Activated CD4-positive, alpha-beta T cell treated with anti-CD3 and anti-CD28 coated beads, Interleukin-2, amount 10 ng/mL, durations not matched to agents 24 days and 14 days (primary cell): ENCODE measurements at regions of chr6 and their contacts with region 1.

Region 1: DNA sequence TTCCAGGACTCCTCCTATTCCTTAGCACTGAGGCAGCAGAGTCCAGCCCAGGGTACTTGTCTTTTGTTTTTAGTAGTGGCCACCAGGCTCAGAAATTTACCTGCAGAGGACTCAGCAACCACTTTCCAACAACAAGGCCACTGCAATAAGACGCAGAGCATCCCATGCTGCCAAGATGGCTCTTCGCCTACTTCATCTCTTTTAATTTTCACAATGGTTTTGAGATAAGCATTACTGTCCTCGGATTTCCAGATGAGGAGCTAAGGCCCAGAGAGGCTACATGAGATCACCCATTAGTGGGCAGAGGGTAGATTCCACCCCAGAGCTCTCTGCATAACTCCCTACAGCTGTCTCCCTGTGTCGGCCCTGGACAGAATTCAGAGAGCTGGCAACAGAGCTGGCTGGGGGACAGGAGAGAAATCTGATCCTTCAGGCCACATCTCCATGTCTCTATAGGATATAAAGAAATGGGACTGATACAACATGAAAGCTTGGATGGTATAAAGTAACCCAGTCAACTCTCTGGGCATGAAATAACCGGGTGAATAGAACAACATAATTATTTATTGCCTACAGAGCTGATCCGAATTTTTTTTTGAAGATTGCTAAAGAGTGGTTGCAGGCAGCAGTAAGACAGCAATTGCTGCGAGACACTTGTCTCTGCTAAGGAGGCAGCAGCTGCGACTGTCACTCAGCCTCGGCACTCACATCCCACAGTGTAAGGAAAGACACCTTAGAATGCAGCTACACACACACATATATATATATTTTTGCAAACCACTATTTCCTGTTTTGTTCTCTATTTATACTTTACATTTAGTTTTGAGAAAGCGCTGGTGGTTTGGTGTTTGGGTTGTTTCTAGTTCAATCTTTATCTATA is 37.2 kb downstream of the SCML4 start:
- DNase-seq: peak; percentile 86
- H3K4me3 Mint-ChIP-seq: peak overlapping the region; percentile 78
- H3K27ac Mint-ChIP-seq: peak overlapping the region; percentile 72
- H3K4me1 Mint-ChIP-seq: peaks cover 58% of the 10 kb centered on the region
- H3K27me3 Mint-ChIP-seq: no peaks in the 10 kb centered on the region

Region 2: GRCh38 chr6:107756660-107757355 is 30.1 kb before region 1 on chr6:
- intact Hi-C with region 1: loop called (anchors 5 kb)
- DNase-seq: no peak
- H3K4me3 Mint-ChIP-seq: no peak overlapping the region
- H3K27ac Mint-ChIP-seq: no peak overlapping the region
- H3K4me1 Mint-ChIP-seq: peaks cover 31% of the 10 kb centered on the region
- H3K27me3 Mint-ChIP-seq: peaks cover 2% of the 10 kb centered on the region

Region 3: GRCh38 chr6:107853230-107853629 is 66.3 kb after region 1 on chr6:
- intact Hi-C with region 1: loop called (anchors 5 kb)
- DNase-seq: peak; percentile 77
- H3K4me3 Mint-ChIP-seq: no peak overlapping the region
- H3K27ac Mint-ChIP-seq: no peak overlapping the region
- H3K4me1 Mint-ChIP-seq: peaks cover 10% of the 10 kb centered on the region
- H3K27me3 Mint-ChIP-seq: peaks cover 6% of the 10 kb centered on the region

Region 4: DNA sequence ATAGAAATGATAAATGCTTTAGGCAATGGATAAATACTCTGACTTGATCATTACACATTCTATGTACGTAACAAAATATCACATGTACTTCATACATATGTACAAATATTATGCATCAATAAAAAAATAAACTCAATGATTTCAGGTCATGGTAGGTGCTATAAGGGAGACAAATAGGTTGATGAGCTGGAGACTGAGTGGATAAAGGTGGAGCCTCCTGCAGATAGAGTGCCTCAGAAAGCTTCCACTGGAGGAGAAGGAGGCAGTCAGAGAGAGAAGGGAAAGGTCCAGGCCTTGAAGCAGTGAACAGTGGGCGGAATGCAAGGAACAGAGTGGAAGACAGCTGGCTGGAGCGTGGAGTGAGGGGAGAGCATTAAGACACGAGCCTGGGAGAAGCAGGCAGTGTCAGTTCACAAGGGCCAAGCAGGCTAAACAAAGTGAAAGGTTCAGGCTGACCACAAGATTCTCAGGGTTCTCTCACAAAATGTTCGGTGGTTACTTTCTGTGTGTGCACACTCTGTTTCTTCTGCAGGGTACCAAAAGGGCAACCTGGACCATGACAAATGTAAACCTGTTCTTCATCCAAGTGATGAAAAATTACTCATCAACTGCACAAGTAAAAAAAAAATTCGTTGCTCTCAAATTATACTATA is 227.0 kb after region 1 on chr6:
- intact Hi-C with region 1: no loop called
- DNase-seq: no peak
- H3K4me3 Mint-ChIP-seq: no peak overlapping the region
- H3K27ac Mint-ChIP-seq: no peak overlapping the region
- H3K4me1 Mint-ChIP-seq: no peaks in the 10 kb centered on the region
- H3K27me3 Mint-ChIP-seq: peaks cover 3% of the 10 kb centered on the region

Region 5: DNA sequence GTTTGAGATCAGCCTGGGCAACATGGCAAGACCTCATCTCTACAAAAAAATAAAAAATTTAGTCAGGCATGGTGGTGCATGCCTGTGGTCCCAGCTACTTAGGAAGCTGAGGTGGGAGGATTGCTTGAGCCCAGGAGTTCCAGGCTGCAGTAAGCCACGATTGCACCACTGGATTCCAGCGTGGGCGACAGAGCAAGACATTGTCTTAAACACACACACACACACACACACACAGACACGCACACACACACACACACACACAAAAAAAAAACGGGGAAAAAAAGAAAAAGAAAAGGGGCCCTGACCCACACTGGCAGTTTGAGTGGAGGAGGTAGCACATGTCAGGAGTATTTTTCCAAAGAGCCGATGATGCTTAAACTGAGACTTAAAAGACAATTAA is 630.1 kb after region 1 on chr6:
- intact Hi-C with region 1: no loop called
- DNase-seq: no peak
- H3K4me3 Mint-ChIP-seq: no peak overlapping the region
- H3K27ac Mint-ChIP-seq: no peak overlapping the region
- H3K4me1 Mint-ChIP-seq: no peaks in the 10 kb centered on the region
- H3K27me3 Mint-ChIP-seq: peaks cover 30% of the 10 kb centered on the region